Activated CD8-positive, alpha-beta T cell treated with anti-CD3 and anti-CD28 coated beads for 36 hours (primary cell): ENCODE measurements at regions of chr19 and their contacts with region 1.

Region 1: GRCh38 chr19:44570984-44571684 is 41.7 kb upstream of the CEACAM20 start:
- DNase-seq: peak; percentile 75
- ATAC-seq: no peak
- H3K4me3 Mint-ChIP-seq: no peak overlapping the region
- H3K27ac Mint-ChIP-seq: no peak overlapping the region
- H3K4me1 Mint-ChIP-seq: no peaks in the 10 kb centered on the region
- H3K27me3 Mint-ChIP-seq: no peaks in the 10 kb centered on the region
- CTCF ChIP-seq: peak; percentile 83

Region 2: DNA sequence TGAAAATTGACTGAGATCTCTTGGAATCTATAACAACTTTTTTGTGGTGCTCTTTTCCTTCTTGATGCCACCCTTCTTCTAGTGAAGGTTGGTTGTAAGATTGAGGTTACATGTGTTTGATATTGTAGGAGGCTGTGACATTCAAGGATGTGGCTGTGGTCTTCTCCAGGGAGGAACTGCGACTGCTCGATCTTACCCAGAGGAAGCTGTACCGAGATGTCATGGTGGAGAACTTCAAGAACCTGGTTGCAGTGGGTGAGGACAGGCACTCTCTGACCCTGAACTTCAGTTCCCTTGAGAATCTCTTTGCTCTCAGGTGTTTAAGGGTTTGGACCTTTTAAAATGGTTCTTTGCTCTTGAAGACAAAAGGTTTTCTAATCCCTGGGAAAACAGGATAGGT is 342.8 kb before region 1 on chr19:
- CTCF ChIA-PET with region 1: no interaction called
- POLR2A ChIA-PET with region 1: no interaction called
- intact Hi-C with region 1: no loop called
- DNase-seq: no peak
- ATAC-seq: no peak
- H3K4me3 Mint-ChIP-seq: no peak overlapping the region
- H3K27ac Mint-ChIP-seq: no peak overlapping the region
- H3K4me1 Mint-ChIP-seq: no peaks in the 10 kb centered on the region
- H3K27me3 Mint-ChIP-seq: no peaks in the 10 kb centered on the region
- CTCF ChIP-seq: no peak

Region 3: GRCh38 chr19:44282846-44283245 is 288.3 kb before region 1 on chr19:
- CTCF ChIA-PET with region 1: no interaction called
- POLR2A ChIA-PET with region 1: no interaction called
- intact Hi-C with region 1: no loop called
- DNase-seq: no peak
- ATAC-seq: no peak
- H3K4me3 Mint-ChIP-seq: no peak overlapping the region
- H3K27ac Mint-ChIP-seq: no peak overlapping the region
- H3K4me1 Mint-ChIP-seq: no peaks in the 10 kb centered on the region
- H3K27me3 Mint-ChIP-seq: no peaks in the 10 kb centered on the region
- CTCF ChIP-seq: no peak

Region 4: DNA sequence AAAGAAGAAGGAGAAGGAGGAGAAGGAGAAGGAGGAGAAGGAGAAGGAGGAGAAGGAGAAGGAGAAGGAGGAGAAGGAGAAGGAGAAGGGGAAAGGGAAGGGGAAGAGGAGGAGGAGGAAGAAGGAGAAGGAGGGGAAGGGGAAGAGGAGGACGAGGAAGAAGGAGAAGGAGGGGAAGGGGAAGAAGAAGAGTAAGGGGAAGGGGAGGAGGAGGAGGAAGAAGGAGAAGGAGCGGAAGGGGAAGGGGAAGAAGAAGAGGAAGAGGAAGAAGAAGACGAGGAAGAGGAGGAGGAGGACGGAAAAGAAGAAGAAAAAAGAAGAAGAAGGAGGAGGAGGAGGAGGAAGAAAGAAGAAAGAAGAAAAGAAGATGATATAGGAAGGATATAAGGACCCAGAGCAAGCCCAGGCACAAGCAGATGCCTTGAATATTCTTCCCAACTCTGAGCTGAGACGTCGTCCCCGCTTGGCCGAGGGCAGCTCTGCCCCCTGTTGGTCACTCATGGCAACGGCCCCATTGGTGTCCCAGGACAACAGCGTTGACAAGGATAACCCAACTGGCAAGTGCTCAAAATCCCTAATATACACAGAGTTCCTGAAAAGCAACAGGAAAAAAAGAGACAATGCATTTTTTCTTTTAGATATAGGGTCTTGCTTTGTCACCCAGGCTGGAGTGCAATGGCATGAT is 11.6 kb after region 1 on chr19:
- CTCF ChIA-PET with region 1: interaction called, 24 read pairs
- POLR2A ChIA-PET with region 1: no interaction called
- intact Hi-C with region 1: no loop called
- DNase-seq: peak; percentile 49
- ATAC-seq: peak; percentile 56
- H3K4me3 Mint-ChIP-seq: no peak overlapping the region
- H3K27ac Mint-ChIP-seq: no peak overlapping the region
- H3K4me1 Mint-ChIP-seq: peaks cover 5% of the 10 kb centered on the region
- H3K27me3 Mint-ChIP-seq: peaks cover 6% of the 10 kb centered on the region
- CTCF ChIP-seq: peak; percentile 54

Region 5: GRCh38 chr19:44653977-44654774 is 83.0 kb after region 1 on chr19:
- CTCF ChIA-PET with region 1: interaction called, 58 read pairs
- POLR2A ChIA-PET with region 1: no interaction called
- intact Hi-C with region 1: loop called (anchors 2 kb)
- DNase-seq: peak; percentile 88
- ATAC-seq: peak; percentile 95
- H3K4me3 Mint-ChIP-seq: no peak overlapping the region
- H3K27ac Mint-ChIP-seq: no peak overlapping the region
- H3K4me1 Mint-ChIP-seq: peaks cover 12% of the 10 kb centered on the region
- H3K27me3 Mint-ChIP-seq: no peaks in the 10 kb centered on the region
- CTCF ChIP-seq: peak; percentile 75

Region 6: DNA sequence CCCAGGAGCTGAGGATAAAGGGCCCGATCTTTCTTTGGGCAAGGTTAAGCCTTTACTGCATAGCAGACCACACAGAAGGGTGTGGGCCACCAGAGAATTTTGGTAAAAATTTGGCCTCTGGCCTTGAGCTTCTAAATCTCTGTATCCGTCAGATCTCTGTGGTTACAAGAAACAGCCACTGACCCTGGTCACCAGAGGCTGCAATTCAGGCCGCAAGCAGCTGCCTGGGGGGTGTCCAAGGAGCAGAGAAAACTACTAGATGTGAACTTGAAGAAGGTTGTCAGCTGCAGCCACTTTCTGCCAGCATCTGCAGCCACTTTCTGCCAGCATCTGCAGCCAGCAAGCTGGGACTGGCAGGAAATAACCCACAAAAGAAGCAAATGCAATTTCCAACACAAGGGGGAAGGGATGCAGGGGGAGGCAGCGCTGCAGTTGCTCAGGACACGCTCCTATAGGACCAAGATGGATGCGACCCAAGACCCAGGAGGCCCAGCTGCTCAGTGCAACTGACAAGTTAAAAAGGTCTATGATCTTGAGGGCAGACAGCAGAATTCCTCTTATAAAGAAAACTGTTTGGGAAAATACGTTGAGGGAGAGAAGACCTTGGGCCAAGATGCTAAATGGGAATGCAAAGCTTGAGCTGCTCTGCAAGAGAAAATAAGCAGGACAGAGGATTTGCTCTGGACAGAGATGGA is 91.7 kb after region 1 on chr19:
- CTCF ChIA-PET with region 1: interaction called, 58 read pairs
- POLR2A ChIA-PET with region 1: no interaction called
- intact Hi-C with region 1: no loop called
- DNase-seq: no peak
- ATAC-seq: no peak
- H3K4me3 Mint-ChIP-seq: no peak overlapping the region
- H3K27ac Mint-ChIP-seq: no peak overlapping the region
- H3K4me1 Mint-ChIP-seq: no peaks in the 10 kb centered on the region
- H3K27me3 Mint-ChIP-seq: no peaks in the 10 kb centered on the region
- CTCF ChIP-seq: no peak